ENCODE measurements at regions of chr16 and their contacts with region 1.

Region 1: DNA sequence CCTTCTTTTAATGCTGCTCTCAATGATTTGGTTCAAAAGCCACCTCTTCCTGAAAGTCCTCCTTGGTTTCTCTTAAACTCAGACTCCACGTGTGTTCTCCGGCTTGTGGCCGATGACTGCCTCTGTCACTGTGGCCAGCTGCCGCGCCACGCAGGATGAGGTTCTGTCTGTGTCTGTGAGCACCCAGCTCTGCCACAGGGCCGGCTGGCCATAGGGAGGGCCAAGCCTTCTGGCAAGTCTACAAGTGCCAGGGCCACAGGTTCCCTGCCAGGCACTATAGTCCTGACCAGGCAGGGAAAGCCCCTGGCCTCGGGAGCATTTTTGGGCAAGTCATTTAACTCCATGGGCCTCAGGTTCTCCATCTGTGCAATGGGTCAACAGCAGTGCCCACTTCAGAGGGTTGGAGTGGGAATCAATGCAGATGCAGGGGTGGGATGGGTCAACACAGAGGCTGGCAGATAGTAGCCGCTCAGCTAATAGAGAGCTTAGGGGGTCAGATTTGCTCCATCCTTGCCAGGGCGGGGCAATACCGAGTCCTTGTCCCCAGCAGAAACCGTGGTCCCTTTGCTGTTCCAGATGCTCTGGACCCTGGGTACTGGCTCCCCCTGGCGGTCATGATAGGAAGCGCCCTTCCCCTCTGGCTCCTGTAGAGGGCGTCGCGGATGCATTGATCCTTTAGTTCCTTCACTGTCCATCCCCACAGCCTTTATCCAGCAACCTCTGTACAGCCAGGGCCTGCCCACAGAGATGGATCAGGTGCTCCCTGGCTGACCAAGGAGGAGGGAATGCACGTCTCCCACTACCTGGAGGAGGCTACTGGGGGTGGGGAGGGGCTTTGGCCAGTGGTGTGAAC is 19.3 kb upstream of the ADGRG3 start:
- DNase-seq: peak; percentile 88 to 91 (median 90)
- ATAC-seq: peak; percentile 89
- H3K4me3 ChIP-seq: no peak overlapping the region
- H3K27ac ChIP-seq: no peak overlapping the region
- H3K4me1 ChIP-seq: peaks cover 0 to 13% of the 10 kb centered on the region in 2 experiments; a peak in 2 of 5 replicates
- H3K27me3 ChIP-seq: peaks cover 0 to 5% of the 10 kb centered on the region in 2 experiments; a peak in 2 of 5 replicates
- CTCF ChIP-seq: peak; percentile 100
- EP300 ChIP-seq: no peak
- POLR2A ChIP-seq: no peak
- RAD21 ChIP-seq: peak; percentile 99 to 100

Region 2: GRCh38 chr16:57226701-57227621 is 421.9 kb before region 1 on chr16:
- CTCF ChIA-PET with region 1: no interaction called
- POLR2A ChIA-PET with region 1: no interaction called
- in situ Hi-C with region 1: no loop called
- intact Hi-C with region 1: no loop called
- DNase-seq: no peak
- ATAC-seq: no peak
- H3K4me3 ChIP-seq: no peak overlapping the region
- H3K27ac ChIP-seq: no peak overlapping the region
- H3K4me1 ChIP-seq: no peaks in the 10 kb centered on the region
- H3K27me3 ChIP-seq: no peaks in the 10 kb centered on the region
- CTCF ChIP-seq: no peak
- EP300 ChIP-seq: no peak
- POLR2A ChIP-seq: no peak
- RAD21 ChIP-seq: no peak

Region 3: DNA sequence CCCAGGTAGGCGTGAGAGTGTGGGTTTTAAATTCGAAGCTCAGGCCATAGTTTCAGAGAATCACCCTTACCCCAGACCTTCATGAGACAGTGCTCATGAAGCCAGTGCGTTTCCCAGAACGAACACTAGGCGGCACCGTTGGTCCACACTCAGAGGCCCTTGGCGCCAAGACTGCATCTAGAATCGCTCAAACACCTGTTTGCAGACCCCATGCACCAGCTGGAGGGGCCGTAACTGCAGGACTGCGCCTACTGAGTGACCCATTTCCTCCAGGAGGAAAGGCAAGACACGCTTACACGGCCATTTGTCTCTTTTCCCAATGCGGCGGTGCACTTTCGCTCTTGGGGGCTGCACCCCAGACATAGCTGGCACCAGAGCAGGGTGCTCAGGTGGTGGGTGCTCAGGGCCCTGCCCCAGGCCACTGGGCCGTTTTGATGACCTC is 72.4 kb before region 1 on chr16:
- CTCF ChIA-PET with region 1: interaction called, 44 read pairs
- POLR2A ChIA-PET with region 1: interaction called, 6 read pairs
- in situ Hi-C with region 1: no loop called
- intact Hi-C with region 1: loop called (anchors 1 kb)
- DNase-seq: peak; percentile 71 to 84 (median 77)
- ATAC-seq: peak; percentile 94
- H3K4me3 ChIP-seq: no peak overlapping the region
- H3K27ac ChIP-seq: no peak overlapping the region
- H3K4me1 ChIP-seq: peaks cover 0 to 16% of the 10 kb centered on the region in 2 experiments; a peak in 3 of 5 replicates
- H3K27me3 ChIP-seq: peaks cover 5 to 46% of the 10 kb centered on the region in 2 experiments; a peak in 4 of 5 replicates
- CTCF ChIP-seq: peak; percentile 92 to 98 (median 94)
- EP300 ChIP-seq: no peak
- POLR2A ChIP-seq: no peak
- RAD21 ChIP-seq: peak; percentile 86 to 93

Region 4: GRCh38 chr16:57591086-57591869 is 57.5 kb before region 1 on chr16:
- CTCF ChIA-PET with region 1: interaction called, 65 read pairs
- POLR2A ChIA-PET with region 1: no interaction called
- in situ Hi-C with region 1: loop called (anchors 5 kb)
- intact Hi-C with region 1: loop called (anchors 1 kb)
- DNase-seq: peak; percentile 80 to 85 (median 82)
- ATAC-seq: peak; percentile 100
- H3K4me3 ChIP-seq: no peak overlapping the region
- H3K27ac ChIP-seq: no peak overlapping the region
- H3K4me1 ChIP-seq: peaks cover 6 to 11% of the 10 kb centered on the region in 2 experiments; a peak in 4 of 5 replicates
- H3K27me3 ChIP-seq: peaks cover 2 to 8% of the 10 kb centered on the region in 2 experiments; a peak in 2 of 5 replicates
- CTCF ChIP-seq: peak; percentile 94 to 99 (median 99)
- EP300 ChIP-seq: no peak
- POLR2A ChIP-seq: no peak
- RAD21 ChIP-seq: peak; percentile 81 to 94

Region 5: DNA sequence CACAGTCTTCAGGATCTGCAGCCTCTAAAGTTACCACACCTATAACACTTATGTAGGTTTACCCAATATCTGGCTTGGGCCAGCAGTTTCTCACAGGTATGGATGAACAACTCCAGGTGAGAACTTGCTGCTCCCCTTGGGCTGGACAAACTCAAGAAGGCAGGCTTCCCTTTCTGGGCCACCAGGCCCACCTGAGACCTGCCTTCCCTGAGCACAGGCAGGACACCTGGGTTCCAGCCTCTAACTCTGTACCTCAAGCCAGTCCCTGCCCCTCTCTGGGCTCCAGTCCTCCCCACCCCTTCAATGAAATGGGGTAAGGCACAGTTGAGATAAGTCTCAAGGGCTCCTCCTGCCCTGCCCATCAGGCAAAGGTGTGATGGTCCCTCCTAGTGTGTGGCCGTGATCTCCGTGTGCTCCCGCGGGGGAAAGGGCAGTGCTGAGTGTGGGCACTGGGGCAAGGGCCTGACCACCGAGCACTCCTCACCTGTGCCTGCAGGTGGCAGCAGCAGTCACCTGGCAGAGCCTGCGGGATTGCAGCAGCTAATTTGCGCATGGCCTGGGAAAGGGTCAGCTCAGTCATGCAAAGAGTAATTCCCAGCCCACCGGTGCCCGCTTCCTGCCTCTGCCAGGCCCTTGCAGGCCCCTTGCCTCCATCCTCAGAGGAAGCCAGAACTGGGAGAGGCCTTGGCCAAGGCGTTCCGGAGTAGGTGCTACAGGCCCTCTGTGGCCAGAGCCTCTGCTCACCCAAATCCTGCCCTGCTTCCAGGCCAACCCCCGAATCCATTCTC is 48.6 kb before region 1 on chr16:
- CTCF ChIA-PET with region 1: interaction called, 32 read pairs
- POLR2A ChIA-PET with region 1: no interaction called
- in situ Hi-C with region 1: no loop called
- intact Hi-C with region 1: loop called (anchors 2 kb)
- DNase-seq: peak; percentile 56 to 64 (median 62)
- ATAC-seq: peak; percentile 96
- H3K4me3 ChIP-seq: no peak overlapping the region
- H3K27ac ChIP-seq: no peak overlapping the region
- H3K4me1 ChIP-seq: peaks cover 12 to 34% of the 10 kb centered on the region in 2 experiments; a peak in 4 of 5 replicates
- H3K27me3 ChIP-seq: no peaks in the 10 kb centered on the region
- CTCF ChIP-seq: peak; percentile 75 to 84 (median 83)
- EP300 ChIP-seq: no peak
- POLR2A ChIP-seq: no peak
- RAD21 ChIP-seq: peak; percentile 42 to 78

Region 6: DNA sequence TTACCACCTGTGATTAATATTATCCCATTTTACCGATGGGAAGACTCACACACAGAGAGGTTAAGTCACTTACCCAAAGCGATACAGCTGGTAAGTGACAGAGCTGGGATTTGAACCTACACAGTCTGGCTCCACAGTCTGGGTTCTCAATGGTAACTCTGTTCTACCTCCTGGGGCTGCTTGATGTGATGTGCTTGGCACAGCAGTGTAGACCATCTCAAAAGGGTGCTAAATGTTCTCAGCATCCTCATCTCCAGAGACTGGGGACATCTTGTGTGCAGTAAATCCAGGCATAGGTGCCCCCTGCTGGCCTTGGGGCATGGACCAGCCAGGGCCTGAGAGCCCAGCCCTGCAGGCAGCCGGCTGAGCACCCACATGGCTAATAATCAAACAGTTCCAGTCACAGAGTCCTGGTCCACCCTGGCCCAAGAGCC is 71.3 kb after region 1 on chr16:
- CTCF ChIA-PET with region 1: interaction called, 44 read pairs
- POLR2A ChIA-PET with region 1: interaction called, 3 read pairs
- in situ Hi-C with region 1: no loop called
- intact Hi-C with region 1: loop called (anchors 1 kb)
- DNase-seq: peak; percentile 60 to 73 (median 68)
- ATAC-seq: peak; percentile 94
- H3K4me3 ChIP-seq: no peak overlapping the region
- H3K27ac ChIP-seq: no peak overlapping the region
- H3K4me1 ChIP-seq: peaks cover 9 to 12% of the 10 kb centered on the region in 2 experiments; a peak in 4 of 5 replicates
- H3K27me3 ChIP-seq: peaks cover 4 to 14% of the 10 kb centered on the region in 2 experiments; a peak in 4 of 5 replicates
- CTCF ChIP-seq: peak; percentile 82 to 93 (median 83)
- EP300 ChIP-seq: no peak
- POLR2A ChIP-seq: no peak
- RAD21 ChIP-seq: peak; percentile 85 to 95

Region 7: GRCh38 chr16:57734925-57735754 is 86.3 kb after region 1 on chr16:
- CTCF ChIA-PET with region 1: interaction called, 19 read pairs
- POLR2A ChIA-PET with region 1: interaction called, 3 read pairs
- in situ Hi-C with region 1: no loop called
- intact Hi-C with region 1: loop called (anchors 5 kb)
- DNase-seq: peak; percentile 98 to 100 (median 99)
- ATAC-seq: peak; percentile 94
- H3K4me3 ChIP-seq: peak overlapping the region; percentile 67
- H3K27ac ChIP-seq: peak overlapping the region; percentile 86
- H3K4me1 ChIP-seq: peaks cover 10 to 40% of the 10 kb centered on the region in 2 experiments; a peak in 3 of 5 replicates
- H3K27me3 ChIP-seq: no peaks in the 10 kb centered on the region
- CTCF ChIP-seq: no peak
- EP300 ChIP-seq: no peak
- POLR2A ChIP-seq: peak; percentile 86
- RAD21 ChIP-seq: no peak

Region 8: DNA sequence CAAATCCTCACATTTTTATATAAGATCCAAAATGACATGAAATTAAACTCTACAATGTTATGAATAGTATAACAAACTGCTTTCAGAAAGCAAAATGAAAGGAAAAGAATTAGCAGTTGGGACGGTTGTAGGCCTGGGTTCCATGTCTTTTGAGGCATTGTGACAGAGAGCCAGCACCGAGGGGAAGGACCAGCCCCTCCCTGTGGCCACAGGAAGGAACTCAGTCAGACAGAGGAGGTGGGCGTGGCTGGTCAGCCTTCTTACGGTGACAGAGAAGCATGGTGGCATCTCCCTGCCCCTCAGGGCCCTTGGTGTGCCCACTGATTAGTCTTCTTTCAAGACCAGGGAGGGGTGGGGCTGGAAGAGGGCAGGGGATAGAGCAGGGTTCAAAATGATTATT is 346.0 kb after region 1 on chr16:
- CTCF ChIA-PET with region 1: interaction called, 3 read pairs
- POLR2A ChIA-PET with region 1: no interaction called
- in situ Hi-C with region 1: no loop called
- intact Hi-C with region 1: loop called (anchors 10 kb)
- DNase-seq: peak; percentile 71 to 86 (median 74)
- ATAC-seq: peak; percentile 95
- H3K4me3 ChIP-seq: no peak overlapping the region
- H3K27ac ChIP-seq: peak overlapping the region; percentile 34; the same call in 1 of the 3 replicates
- H3K4me1 ChIP-seq: peaks cover 16 to 21% of the 10 kb centered on the region in 2 experiments; a peak in 4 of 5 replicates
- H3K27me3 ChIP-seq: no peaks in the 10 kb centered on the region
- CTCF ChIP-seq: peak; percentile 83 to 90 (median 83)
- EP300 ChIP-seq: no peak
- POLR2A ChIP-seq: no peak
- RAD21 ChIP-seq: peak; percentile 56 to 80

Measured in K562 (cell line).